ENCODE measurements at regions of chr18 and their contacts with region 1.

Region 1: GRCh38 chr18:25351777-25352628 is at the start of gene ZNF521:
- DNase-seq: peak; percentile 80 to 94
- ATAC-seq: peak; percentile 91
- H3K4me3 ChIP-seq: peak within 1 kb of the TSS; percentile 92 to 99
- H3K27ac ChIP-seq: peak within 1 kb of the TSS; percentile 7 to 11
- H3K4me1 ChIP-seq: no peaks in the 10 kb centered on the region
- H3K27me3 ChIP-seq: no peaks in the 10 kb centered on the region
- total RNA-seq, gene ZNF521: 26.4 to 88.7 TPM

Region 2: GRCh38 chr18:24397694-24398365 is 954.2 kb before region 1 on chr18 and contains the start of gene OSBPL1A:
- intact Hi-C with region 1: loop called (anchors 5 to 10 kb)
- DNase-seq: peak; percentile 97 to 98
- ATAC-seq: peak; percentile 99
- H3K4me3 ChIP-seq: peak within 1 kb of the TSS; percentile 14 to 82
- H3K27ac ChIP-seq: peak within 1 kb of the TSS in 1 of 2 donors; percentile 41
- H3K4me1 ChIP-seq: no peaks in the 10 kb centered on the region
- H3K27me3 ChIP-seq: no peaks in the 10 kb centered on the region
- total RNA-seq, gene OSBPL1A: 43.2 to 47.4 TPM

Region 3: DNA sequence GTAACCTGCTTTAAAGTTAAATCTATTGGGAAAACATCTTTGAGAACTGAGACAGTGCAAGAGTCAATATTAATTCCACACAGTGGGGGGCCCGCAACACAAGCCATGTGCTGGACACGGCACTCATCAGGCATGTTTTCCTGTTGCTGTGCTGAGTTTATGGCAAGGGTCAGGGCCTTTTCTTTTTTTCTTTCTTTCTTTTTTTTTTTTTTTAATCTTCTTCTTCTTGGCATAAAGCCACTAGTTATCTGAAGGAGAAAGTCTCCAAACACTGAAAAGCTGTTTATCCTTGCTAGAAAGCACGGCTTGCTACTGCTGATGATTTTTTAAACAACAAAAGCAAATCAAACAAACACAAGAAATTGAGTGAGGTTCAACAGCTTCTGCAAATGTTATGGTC is 252.1 kb before region 1 on chr18:
- intact Hi-C with region 1: no loop called
- DNase-seq: no peak
- ATAC-seq: no peak
- H3K4me3 ChIP-seq: no peak overlapping the region
- H3K27ac ChIP-seq: no peak overlapping the region
- H3K4me1 ChIP-seq: no peaks in the 10 kb centered on the region
- H3K27me3 ChIP-seq: no peaks in the 10 kb centered on the region

Region 4: GRCh38 chr18:25230658-25231326 is 121.2 kb before region 1 on chr18:
- intact Hi-C with region 1: loop called in 1 of 2 experiments (anchors 5 kb)
- DNase-seq: peak; percentile 78 to 81
- ATAC-seq: peak; percentile 87
- H3K4me3 ChIP-seq: no peak overlapping the region
- H3K27ac ChIP-seq: peak overlapping the region in 1 of 2 donors; percentile 90
- H3K4me1 ChIP-seq: peaks cover 3 to 4% of the 10 kb centered on the region in 2 donors
- H3K27me3 ChIP-seq: no peaks in the 10 kb centered on the region

Region 5: DNA sequence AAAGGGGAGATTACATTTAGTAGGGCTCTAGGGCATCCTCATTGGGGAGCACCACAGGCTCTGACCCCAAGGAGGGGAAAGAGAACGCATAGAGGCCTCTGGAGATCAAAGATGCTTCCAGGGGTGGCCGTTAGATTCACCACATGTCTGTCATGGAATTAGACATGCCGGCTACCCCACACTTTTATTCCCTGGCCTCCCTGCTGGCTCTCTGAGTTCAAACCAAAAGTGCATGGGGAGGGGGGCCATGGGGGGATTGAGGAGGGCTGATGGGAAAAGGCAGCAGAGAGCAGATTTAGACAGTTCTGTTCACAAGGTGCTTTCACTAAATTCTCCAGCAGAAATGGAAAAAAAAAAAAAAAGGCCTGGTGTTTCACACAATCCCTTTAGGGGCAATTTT is 64.4 kb after region 1 on chr18:
- intact Hi-C with region 1: no loop called
- DNase-seq: no peak
- ATAC-seq: no peak
- H3K4me3 ChIP-seq: no peak overlapping the region
- H3K27ac ChIP-seq: no peak overlapping the region
- H3K4me1 ChIP-seq: no peaks in the 10 kb centered on the region
- H3K27me3 ChIP-seq: no peaks in the 10 kb centered on the region

Region 6: DNA sequence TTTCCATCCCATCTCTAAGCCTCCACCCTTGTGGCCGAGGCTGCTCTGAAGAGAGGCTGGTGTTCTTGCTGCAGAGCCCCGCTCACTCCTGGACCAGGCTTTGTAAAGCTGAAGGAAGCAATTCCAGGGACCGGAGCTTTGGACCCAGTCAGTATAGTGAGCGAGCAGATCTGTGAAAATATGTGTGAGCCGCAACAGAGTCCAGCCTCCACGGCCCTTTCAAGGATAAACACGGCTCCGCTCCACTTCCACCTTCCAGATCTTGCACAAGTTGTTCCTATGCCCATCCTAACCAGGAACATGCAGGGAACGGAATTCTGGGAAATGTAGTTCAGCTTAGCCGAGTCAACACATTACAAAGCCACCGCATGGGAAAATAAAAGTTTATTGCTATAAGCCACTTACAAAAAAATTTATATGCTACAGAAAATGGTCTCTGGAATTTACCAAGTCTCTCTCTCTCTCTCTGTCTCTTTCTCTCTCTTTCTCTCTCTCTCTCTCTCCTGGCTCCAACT is 151.6 kb after region 1 on chr18:
- intact Hi-C with region 1: loop called (anchors 5 kb)
- DNase-seq: peak; percentile 60 to 75
- ATAC-seq: peak; percentile 90
- H3K4me3 ChIP-seq: peak overlapping the region; percentile 33 to 47
- H3K27ac ChIP-seq: no peak overlapping the region
- H3K4me1 ChIP-seq: no peaks in the 10 kb centered on the region
- H3K27me3 ChIP-seq: no peaks in the 10 kb centered on the region

Measured in aorta (tissue), 5 donors.